Endothelial cell of umbilical vein (primary cell): ENCODE measurements at regions of chr9 and their contacts with region 1.

Region 1: DNA sequence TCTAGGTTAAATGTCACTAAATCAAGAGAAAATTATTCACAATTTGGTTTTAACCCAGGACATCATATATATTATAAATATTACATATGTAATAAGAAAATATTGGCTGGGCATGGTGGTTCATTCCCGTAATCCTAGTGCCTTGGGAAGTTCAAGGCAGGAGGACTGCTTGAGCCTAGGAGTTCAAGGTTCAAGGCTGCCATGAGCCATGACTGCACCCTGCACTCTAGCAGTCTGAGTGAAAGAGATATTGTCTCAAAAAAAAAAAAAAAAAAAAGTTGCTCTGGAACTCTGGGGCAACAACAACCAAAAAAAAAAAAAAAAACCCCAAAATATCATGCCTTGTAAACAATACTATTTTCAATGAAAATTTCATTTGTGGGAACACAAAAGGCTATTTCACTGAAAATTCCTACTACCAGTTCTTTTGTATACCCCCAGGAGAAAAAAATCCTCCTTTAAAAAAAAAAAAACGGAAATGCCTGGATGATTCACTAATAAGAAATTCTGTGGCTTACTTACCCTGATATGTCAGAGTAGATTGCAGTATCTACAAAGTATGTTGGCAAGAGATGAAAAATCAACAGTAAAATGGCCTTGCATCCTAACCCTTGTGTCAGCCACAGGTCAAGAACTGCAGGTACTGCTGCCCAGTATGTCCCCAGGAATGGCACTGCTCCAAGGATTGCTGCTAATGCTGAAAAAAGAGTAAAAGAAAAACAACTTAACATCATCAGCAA is 22.6 kb upstream of the CTNNAL1 start:
- DNase-seq: peak; percentile 94
- H3K4me3 ChIP-seq: no peak overlapping the region
- H3K27ac ChIP-seq: peak overlapping the region; percentile 84
- H3K4me1 ChIP-seq: peaks cover 42% of the 10 kb centered on the region
- H3K27me3 ChIP-seq: no peaks in the 10 kb centered on the region
- CTCF ChIP-seq: no peak
- POLR2A ChIP-seq: no peak

Region 2: DNA sequence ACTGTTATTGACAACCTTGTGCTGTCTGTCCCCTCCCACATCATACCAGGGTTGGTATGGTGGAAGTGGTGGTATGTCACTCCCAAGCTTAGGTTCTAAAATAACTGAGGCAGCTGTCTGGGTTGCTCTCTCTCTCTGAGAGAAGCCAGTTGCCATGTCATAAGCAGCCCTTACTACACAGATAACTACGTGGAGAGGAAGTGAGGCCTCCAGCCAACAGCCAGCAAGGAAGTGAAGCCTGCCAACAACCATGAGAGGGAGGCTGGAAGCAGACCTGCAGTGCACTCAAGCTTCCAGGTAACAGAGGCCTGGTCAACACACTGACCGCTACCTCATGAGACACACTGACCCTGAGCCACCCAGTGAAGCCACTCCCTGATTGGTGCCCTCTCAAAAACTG is 41.2 kb before region 1 on chr9:
- CTCF ChIA-PET with region 1: interaction called, 3 read pairs
- POLR2A ChIA-PET with region 1: no interaction called
- dilution Hi-C with region 1: no loop called
- intact Hi-C with region 1: loop called (anchors 1 kb)
- DNase-seq: peak; percentile 95
- H3K4me3 ChIP-seq: no peak overlapping the region
- H3K27ac ChIP-seq: peak overlapping the region; percentile 49
- H3K4me1 ChIP-seq: peaks cover 50% of the 10 kb centered on the region
- H3K27me3 ChIP-seq: no peaks in the 10 kb centered on the region
- CTCF ChIP-seq: no peak
- POLR2A ChIP-seq: no peak

Region 3: DNA sequence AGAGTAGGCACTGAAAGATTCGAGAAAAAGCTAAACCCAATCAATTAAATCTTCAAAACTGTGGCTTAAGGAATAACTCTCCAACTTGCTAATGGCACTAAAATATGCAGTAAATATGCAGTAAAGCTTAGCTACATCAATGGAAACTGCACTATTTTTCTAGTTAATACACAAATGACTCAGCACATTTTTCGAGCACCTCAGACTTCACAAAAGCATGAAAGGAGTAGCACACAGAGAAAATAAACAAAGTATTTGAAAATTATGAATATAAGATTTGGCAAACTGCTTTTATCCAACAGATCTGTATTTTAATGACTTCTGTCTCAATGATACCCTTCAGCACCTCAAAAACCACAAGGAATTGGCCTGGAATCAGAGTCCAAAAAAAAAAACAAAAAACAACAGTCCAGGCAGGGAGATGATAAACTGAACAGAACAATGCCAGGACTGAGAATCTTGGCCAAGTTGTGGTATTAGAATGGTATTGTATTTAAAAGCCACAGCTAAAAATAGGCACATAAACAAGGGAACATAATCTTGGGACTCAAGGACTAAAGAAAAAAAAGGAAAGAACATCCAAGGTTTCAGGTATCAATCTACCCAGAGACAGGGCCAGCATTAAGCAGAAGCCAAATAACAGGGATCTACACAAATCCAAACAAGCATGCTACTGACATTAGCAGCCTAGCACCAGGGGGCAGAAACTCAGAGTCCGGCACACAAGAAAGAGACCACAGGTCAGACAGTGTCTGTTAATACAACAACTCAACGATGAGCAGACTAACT is 62.5 kb after region 1 on chr9:
- CTCF ChIA-PET with region 1: no interaction called
- POLR2A ChIA-PET with region 1: no interaction called
- dilution Hi-C with region 1: no loop called
- intact Hi-C with region 1: loop called (anchors 2 kb)
- DNase-seq: peak; percentile 97
- H3K4me3 ChIP-seq: peak overlapping the region in 1 of 3 experiments; percentile 21
- H3K27ac ChIP-seq: peak overlapping the region; percentile 52
- H3K4me1 ChIP-seq: peaks cover 54% of the 10 kb centered on the region
- H3K27me3 ChIP-seq: no peaks in the 10 kb centered on the region
- CTCF ChIP-seq: peak; percentile 19 to 33
- POLR2A ChIP-seq: no peak